Cardiac septum (tissue), 1 donor: ENCODE measurements at regions of chr13 and their contacts with region 1.

Region 1: GRCh38 chr13:100514788-100515409 is 73.7 kb downstream of the GGACT start:
- DNase-seq: peak; percentile 86

Region 2: DNA sequence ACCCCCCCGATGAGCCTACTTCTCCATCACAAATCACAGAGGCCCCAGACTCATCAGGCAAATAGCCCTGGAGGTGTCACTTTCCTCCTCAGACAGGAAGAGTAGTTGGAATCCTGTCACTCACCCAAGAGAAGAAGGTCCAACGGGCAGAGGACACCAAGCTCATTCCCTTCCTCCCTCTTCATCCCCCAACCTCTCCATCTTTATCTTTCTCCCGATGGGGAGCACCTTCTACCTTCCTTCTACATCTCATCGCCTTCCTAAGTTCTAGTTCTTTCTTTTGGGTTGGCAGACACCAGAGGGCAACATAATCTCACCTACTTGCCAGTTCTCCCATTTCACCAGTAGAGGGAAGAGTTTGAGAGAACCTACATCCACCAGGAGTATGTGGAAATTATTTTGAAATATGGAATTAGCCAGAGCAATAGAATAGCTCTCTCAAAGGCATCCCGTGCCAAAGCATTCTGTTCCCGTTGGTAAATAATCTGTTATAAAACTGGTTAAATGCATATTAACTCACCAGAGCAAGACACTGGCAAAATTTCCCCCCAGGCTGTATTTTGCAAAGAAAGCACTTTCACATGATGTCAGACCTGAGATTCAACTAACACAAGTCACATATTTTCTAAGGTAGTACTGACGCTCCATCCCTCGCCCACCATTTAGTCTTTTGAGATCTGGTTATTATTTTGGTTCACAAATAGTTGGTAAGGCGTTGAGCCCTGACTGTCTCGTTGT is 598.4 kb before region 1 on chr13:
- intact Hi-C with region 1: loop called (anchors 2 kb)
- DNase-seq: no peak

Region 3: DNA sequence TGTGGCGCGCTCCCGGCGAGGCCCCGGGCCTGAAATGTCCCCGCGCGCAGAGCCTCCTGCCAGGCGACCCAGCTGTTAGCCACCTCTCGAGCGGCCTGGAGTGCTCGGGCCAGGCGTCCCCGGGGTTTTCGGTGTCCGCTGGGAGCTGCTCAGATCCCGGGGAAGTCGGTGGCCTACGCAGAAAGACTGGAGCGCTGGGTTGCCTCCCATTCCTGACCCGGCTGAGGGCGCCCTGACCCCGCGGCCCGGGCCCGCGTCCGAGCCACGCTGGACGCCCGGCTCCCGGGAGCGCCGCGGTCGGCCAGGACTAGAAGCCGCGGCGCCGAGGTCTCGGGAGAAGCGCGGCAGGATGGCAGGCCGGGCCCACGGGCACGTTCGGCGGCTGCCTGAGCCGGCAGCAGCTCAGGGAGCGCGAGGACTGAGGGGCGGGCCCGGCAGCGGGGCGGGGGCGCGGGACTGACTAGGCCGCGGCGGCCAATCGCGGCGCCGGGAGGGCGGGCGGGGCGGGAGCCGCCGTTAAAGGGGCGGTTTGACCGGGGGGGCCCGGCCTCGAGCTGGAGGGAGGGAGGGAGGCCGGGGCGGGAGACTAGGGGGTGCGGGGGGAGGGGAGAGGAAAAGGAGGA is 534.6 kb before region 1 on chr13:
- intact Hi-C with region 1: loop called (anchors 10 kb)
- DNase-seq: no peak

Region 4: GRCh38 chr13:100235311-100235901 is 279.5 kb before region 1 on chr13:
- intact Hi-C with region 1: loop called (anchors 10 kb)
- DNase-seq: no peak

Region 5: DNA sequence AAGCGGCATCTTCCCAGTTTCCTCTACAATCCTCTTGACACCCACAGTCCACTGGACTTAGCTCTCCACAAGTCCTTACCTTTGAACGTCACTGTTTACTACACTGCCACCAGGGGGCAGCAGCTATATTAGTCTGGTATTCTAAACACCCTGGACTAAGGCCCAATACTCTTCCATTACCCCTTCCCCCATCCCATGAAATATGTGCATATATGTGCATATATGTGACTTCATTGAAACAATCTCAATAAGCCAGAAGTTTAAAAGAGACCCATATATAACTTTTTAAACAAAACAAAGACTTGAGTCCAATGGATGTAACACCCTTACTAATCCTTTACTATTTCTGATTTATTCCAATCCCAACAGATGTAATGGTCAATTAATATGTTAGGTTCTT is 58.2 kb after region 1 on chr13:
- intact Hi-C with region 1: no loop called
- DNase-seq: no peak

Region 6: DNA sequence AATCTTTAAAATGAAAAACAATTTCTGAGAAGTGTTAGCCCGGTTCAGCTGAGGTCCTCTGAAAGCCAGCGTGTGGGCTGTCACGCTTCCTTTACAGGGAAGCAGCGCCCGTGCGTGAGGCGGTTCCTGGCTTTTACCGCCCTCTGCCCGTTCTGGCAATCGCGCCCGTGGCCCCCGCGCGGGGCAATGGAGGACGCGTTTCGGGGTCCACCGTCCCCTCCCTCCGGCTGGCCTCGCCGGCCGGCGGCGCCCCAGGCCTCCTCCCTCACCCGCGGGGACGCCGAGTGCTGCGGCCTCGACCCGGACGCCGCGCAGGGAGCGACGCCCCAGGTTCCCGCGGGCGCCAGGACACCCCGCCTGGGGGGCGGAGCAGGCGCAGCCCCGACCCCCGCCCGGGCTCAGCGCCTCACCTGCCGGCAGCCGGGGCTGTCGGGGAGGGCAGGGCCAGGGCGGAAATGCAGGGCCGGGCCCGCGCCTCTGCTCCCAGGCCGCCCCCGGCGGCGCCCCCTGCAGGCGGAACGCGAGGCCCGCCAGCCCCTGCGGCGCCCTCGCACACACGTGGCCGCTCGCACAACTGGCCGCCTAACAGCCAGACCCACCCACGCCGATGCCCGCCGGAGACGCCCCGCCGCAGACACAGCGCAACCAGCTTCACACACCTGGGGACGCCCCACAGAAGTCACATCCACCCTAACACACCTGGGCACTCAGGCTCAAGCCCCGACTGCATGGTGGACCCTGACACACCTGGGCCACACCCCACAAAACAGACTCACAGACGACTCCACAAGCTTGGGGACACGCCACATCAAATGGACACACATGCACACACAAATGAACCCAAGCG is 73.7 kb after region 1 on chr13 and contains the start of gene GGACT:
- intact Hi-C with region 1: no loop called
- DNase-seq: peak; percentile 83
- total RNA-seq, gene GGACT: 1.7 TPM

Region 7: DNA sequence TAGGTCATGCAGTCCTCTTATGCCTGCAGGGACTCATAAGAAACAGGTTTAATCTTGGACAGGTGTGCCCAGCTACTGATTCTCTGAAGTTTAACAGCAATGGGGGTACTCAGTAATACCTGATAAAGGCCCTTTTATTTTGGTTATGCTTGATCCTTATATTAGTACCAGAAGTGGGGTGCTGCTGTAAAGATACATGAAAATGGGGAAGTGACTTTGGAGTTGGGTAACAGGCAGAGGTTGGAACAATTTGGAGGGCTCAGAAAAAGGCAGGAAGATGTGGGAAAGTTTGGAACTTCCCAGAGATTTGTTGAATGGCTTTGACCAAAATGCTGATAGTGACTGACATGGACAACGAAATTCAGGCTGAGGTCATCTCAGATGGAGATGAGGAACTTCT is 174.3 kb after region 1 on chr13:
- intact Hi-C with region 1: no loop called
- DNase-seq: no peak